CD4-positive, alpha-beta memory T cell (primary cell): ENCODE measurements at regions of chr12 and their contacts with region 1.

Region 1: GRCh38 chr12:57771708-57772428 is at the start of gene METTL1:
- DNase-seq: peak; percentile 88 to 95 (median 91)
- H3K4me3 ChIP-seq: peak within 1 kb of the TSS; percentile 98 to 99
- H3K4me3 Mint-ChIP-seq: peak within 1 kb of the TSS; percentile 95 to 100 (median 96)
- H3K27ac ChIP-seq: peak within 1 kb of the TSS; percentile 84
- H3K27ac Mint-ChIP-seq: peak within 1 kb of the TSS; percentile 94 to 99 (median 98)
- H3K4me1 ChIP-seq: peaks cover 30% of the 10 kb centered on the region
- H3K4me1 Mint-ChIP-seq: peaks cover 14 to 33% (median 21%) of the 10 kb centered on the region in 4 donors
- H3K27me3 ChIP-seq: peaks cover 4% of the 10 kb centered on the region
- H3K27me3 Mint-ChIP-seq: peaks cover 0 to 2% of the 10 kb centered on the region in 2 donors
- total RNA-seq, gene METTL1: 9.9 to 10.9 TPM

Region 2: DNA sequence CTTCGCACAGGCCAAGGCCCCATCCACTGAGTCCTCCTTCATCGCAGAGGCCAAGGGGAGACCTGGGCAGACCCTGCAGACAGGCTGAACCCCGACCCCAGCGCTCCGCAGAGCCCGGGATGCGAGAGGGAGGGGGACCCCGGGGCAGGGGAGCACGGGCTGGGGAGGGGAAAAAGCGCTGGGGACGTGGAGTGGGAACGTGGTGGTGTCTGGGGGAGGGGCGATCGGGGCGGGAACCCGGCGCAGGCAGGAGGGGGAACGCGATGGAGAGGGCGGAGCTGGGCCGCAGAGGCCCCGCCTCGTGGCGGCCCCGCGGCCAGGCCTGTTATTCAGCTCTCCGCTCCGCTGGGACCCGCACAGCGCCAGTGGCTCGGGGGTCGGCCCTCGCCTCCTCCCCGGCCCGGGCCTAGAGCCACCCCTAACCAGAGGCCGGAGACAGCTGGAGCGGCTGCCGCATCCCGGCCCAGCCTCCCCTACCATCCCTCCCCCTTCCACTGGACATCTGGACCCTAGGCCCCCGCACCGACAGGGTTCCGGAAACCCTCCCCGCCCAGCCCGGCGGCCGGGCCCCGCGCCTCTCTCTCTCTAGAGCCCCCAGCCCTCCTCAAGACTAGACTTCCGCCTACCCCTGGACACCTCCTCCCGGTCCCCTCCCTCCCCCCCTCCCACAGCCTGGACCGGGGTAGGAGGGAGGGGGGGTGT is 160.6 kb before region 1 on chr12 and contains the start of gene ARHGEF25:
- CTCF ChIA-PET with region 1: no interaction called
- POLR2A ChIA-PET with region 1: no interaction called
- intact Hi-C with region 1: no loop called
- DNase-seq: no peak
- H3K4me3 ChIP-seq: peak within 1 kb of the TSS; percentile 23 to 57
- H3K4me3 Mint-ChIP-seq: peak within 1 kb of the TSS; percentile 74 to 89 (median 80)
- H3K27ac ChIP-seq: no peak within 1 kb of the TSS
- H3K27ac Mint-ChIP-seq: peak within 1 kb of the TSS in 4 of 7 donors; percentile 15 to 78 (median 57)
- H3K4me1 ChIP-seq: peaks cover 9% of the 10 kb centered on the region
- H3K4me1 Mint-ChIP-seq: peaks cover 3 to 17% (median 9%) of the 10 kb centered on the region in 4 donors
- H3K27me3 ChIP-seq: peaks cover 10% of the 10 kb centered on the region
- H3K27me3 Mint-ChIP-seq: peaks cover 3 to 21% of the 10 kb centered on the region in 2 donors
- total RNA-seq, gene ARHGEF25: 0.47 to 0.67 TPM

Region 3: GRCh38 chr12:57674691-57675090 is 97.2 kb before region 1 on chr12:
- CTCF ChIA-PET with region 1: no interaction called
- POLR2A ChIA-PET with region 1: no interaction called
- intact Hi-C with region 1: no loop called
- DNase-seq: no peak
- H3K4me3 ChIP-seq: no peak overlapping the region
- H3K4me3 Mint-ChIP-seq: no peak overlapping the region
- H3K27ac ChIP-seq: no peak overlapping the region
- H3K27ac Mint-ChIP-seq: no peak overlapping the region
- H3K4me1 ChIP-seq: no peaks in the 10 kb centered on the region
- H3K4me1 Mint-ChIP-seq: no peaks in the 10 kb centered on the region
- H3K27me3 ChIP-seq: no peaks in the 10 kb centered on the region
- H3K27me3 Mint-ChIP-seq: peaks cover 2 to 5% of the 10 kb centered on the region in 2 donors

Region 4: DNA sequence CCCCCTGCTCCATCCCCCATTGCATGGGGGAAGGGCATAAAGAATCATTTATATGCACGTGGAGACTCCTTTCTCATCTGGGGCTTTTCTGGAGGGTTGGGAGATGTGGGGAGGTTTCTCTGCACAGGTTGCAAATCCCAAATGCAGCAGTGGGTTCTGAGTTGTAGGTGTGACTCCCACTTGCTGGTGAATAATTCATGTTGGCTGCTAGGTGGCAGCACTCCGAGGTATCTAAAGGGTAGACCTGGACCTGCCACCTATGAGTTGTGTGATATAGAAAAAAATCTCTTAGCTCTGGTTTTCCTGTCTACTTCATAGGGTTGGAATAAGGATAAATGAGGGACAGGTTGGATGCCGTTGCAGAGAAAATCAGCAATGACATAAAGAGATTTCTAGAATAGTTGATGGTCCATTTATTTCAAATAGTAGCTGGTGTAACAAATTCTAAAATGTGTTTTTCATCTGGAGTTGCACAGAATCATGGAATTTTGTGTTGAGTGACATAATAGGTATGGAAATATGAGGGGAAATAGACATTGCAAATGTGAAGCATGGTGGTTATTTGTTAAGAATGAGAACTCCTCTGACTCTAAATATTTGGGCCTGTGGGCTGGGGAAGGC is 12.4 kb before region 1 on chr12:
- CTCF ChIA-PET with region 1: interaction called, 36 read pairs
- POLR2A ChIA-PET with region 1: interaction called, 26 read pairs
- intact Hi-C with region 1: no loop called
- DNase-seq: peak in 4 of 5 donors; percentile 47 to 65 (median 56)
- H3K4me3 ChIP-seq: no peak overlapping the region
- H3K4me3 Mint-ChIP-seq: peak overlapping the region in 3 of 8 donors; percentile 39 to 70 (median 64)
- H3K27ac ChIP-seq: no peak overlapping the region
- H3K27ac Mint-ChIP-seq: peak overlapping the region in 5 of 7 donors; percentile 32 to 82 (median 79)
- H3K4me1 ChIP-seq: peaks cover 33% of the 10 kb centered on the region
- H3K4me1 Mint-ChIP-seq: peaks cover 25 to 54% (median 35%) of the 10 kb centered on the region in 4 donors
- H3K27me3 ChIP-seq: no peaks in the 10 kb centered on the region
- H3K27me3 Mint-ChIP-seq: peaks cover 3 to 6% of the 10 kb centered on the region in 2 donors